Heart left ventricle (tissue), 16 donors: ENCODE measurements at regions of chr22 and their contacts with region 1.

Region 1: DNA sequence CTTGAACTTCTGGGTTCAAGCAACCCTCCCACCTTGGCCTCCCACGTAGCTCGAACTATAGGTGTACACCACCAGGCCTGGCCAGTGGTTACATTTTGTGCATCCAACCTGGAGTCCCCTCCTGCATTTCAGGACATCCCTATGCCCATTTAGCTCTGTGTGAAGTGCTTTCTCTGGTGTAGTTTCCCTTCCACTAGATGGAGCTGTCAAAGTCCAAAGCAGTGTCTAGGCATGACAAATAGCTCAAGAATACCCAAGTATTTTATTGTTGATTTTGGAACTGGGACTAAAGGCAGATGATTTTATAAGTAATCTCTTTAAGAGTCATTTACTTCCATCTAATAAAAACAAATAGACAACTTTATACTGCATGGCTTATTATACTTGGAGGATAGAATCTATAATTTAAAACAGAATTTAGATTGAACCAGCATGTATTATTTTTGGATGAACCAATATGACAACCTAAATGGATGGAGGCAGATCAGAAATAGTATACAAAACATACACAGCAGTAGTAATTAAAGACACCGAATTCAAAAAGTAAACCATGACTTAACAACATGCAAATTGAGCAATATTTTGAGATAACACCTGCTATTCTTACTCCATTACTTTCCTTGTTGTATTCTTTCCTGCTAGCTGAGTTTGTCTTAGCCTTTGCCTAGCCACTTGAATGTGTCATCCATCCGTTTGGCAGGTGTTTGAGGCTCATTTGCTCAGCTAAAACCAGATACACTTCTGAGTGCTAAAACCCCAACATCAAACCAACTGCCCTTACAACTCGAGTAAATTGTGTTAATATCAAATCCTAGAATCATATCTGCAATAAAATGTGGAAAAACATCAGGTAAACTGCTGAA is 37.7 kb downstream of the EIF4ENIF1 start:
- DNase-seq: no peak
- ATAC-seq: peak in 3 of 4 donors; percentile 30 to 49 (median 38)
- H3K4me3 ChIP-seq: no peak overlapping the region
- H3K27ac ChIP-seq: peak overlapping the region in 1 of 12 donors; percentile 9
- H3K4me1 ChIP-seq: peaks cover 0 to 38% (median 14%) of the 10 kb centered on the region in 12 donors
- H3K27me3 ChIP-seq: no peaks in the 10 kb centered on the region
- CTCF ChIP-seq: peak in 9 of 12 donors; percentile 21 to 48 (median 32)
- POLR2A ChIP-seq: no peak

Region 2: GRCh38 chr22:31436132-31436531 is 15.8 kb before region 1 on chr22:
- intact Hi-C with region 1: no loop called
- DNase-seq: no peak
- ATAC-seq: no peak
- H3K4me3 ChIP-seq: no peak overlapping the region
- H3K27ac ChIP-seq: no peak overlapping the region
- H3K4me1 ChIP-seq: peaks cover 0 to 21% (median 4%) of the 10 kb centered on the region in 12 donors
- H3K27me3 ChIP-seq: no peaks in the 10 kb centered on the region
- CTCF ChIP-seq: no peak
- POLR2A ChIP-seq: no peak

Region 3: GRCh38 chr22:31489604-31490495 is 37.9 kb after region 1 on chr22 and contains the start of gene EIF4ENIF1:
- intact Hi-C with region 1: loop called in 1 of 10 experiments (anchors 5 kb)
- DNase-seq: peak; percentile 91 to 94 (median 92)
- ATAC-seq: peak; percentile 87 to 97 (median 96)
- H3K4me3 ChIP-seq: peak within 1 kb of the TSS; percentile 56 to 98 (median 84)
- H3K27ac ChIP-seq: peak within 1 kb of the TSS; percentile 91 to 99 (median 96)
- H3K4me1 ChIP-seq: peaks cover under 1 to 42% (median 21%) of the 10 kb centered on the region in 12 donors
- H3K27me3 ChIP-seq: no peaks in the 10 kb centered on the region
- CTCF ChIP-seq: no peak
- POLR2A ChIP-seq: peak in 1 of 2 donors; percentile 75
- total RNA-seq, gene EIF4ENIF1: 12.1 to 31.2 (median 23.8) TPM

Region 4: GRCh38 chr22:31891366-31892079 is 439.6 kb after region 1 on chr22:
- intact Hi-C with region 1: no loop called
- DNase-seq: no peak
- ATAC-seq: no peak
- H3K4me3 ChIP-seq: no peak overlapping the region
- H3K27ac ChIP-seq: no peak overlapping the region
- H3K4me1 ChIP-seq: no peaks in the 10 kb centered on the region
- H3K27me3 ChIP-seq: no peaks in the 10 kb centered on the region
- CTCF ChIP-seq: no peak
- POLR2A ChIP-seq: no peak